Activated CD4-positive, alpha-beta memory T cell treated with anti-CD3 and anti-CD28 coated beads, Interleukin-2, amount 10 ng/mL, durations not matched to agents 7 days and 5 days (primary cell): ENCODE measurements at regions of chr2 and their contacts with region 1.

Region 1: GRCh38 chr2:27071277-27071989 is at the start of gene OST4:
- DNase-seq: peak; percentile 93
- H3K4me3 Mint-ChIP-seq: peak within 1 kb of the TSS; percentile 99
- H3K27ac Mint-ChIP-seq: peak within 1 kb of the TSS; percentile 95
- H3K4me1 Mint-ChIP-seq: peaks cover 73% of the 10 kb centered on the region
- H3K27me3 Mint-ChIP-seq: no peaks in the 10 kb centered on the region
- total RNA-seq, gene OST4: 305 to 312 TPM

Region 2: GRCh38 chr2:26745609-26746327 is 325.7 kb before region 1 on chr2:
- CTCF ChIA-PET with region 1: no interaction called
- POLR2A ChIA-PET with region 1: no interaction called
- DNase-seq: peak; percentile 80
- H3K4me3 Mint-ChIP-seq: no peak overlapping the region
- H3K27ac Mint-ChIP-seq: no peak overlapping the region
- H3K4me1 Mint-ChIP-seq: peaks cover 5% of the 10 kb centered on the region
- H3K27me3 Mint-ChIP-seq: no peaks in the 10 kb centered on the region

Region 3: DNA sequence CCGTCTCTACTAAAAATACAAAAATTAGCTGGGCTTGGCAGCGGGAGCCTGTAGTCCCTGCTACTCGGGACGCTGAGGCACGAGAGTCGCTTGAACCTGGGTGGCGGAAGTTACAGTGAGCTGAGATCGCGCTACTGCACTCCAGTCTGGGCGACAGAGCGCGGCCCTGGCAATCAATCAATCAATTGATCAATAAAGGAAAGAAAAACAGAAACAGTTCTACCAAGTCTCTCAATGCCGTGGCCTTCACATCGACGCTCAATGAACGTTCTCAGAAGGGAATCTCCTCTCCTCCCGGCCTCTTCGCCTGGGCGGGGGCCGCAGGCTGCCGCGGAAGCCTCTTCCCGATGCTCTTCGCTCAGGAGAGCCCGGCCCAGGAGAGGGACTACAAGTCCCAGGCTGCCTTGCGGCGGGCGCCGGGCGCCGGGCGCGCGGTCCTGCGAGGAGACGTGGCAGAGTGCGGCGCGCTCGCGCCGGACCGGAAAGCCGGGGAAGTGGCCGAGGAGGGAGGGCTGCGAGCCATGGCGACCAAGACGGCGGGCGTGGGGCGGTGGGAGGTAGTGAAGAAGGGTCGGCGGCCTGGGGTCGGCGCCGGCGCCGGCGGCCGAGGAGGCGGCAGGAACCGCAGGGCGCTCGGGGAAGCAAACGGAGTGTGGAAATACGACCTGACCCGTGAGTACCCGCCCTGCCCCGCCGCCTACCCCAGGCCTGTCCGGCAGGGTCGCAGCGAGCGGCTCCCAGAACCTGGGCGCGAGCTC is 38.8 kb before region 1 on chr2 and contains the start of gene TMEM214:
- CTCF ChIA-PET with region 1: no interaction called
- POLR2A ChIA-PET with region 1: interaction called, 14 read pairs
- DNase-seq: peak; percentile 87
- H3K4me3 Mint-ChIP-seq: peak within 1 kb of the TSS; percentile 93
- H3K27ac Mint-ChIP-seq: peak within 1 kb of the TSS; percentile 86
- H3K4me1 Mint-ChIP-seq: peaks cover 62% of the 10 kb centered on the region
- H3K27me3 Mint-ChIP-seq: no peaks in the 10 kb centered on the region
- total RNA-seq, gene TMEM214: 80.4 to 80.7 TPM

Region 4: GRCh38 chr2:27086090-27086723 is 14.8 kb after region 1 on chr2:
- CTCF ChIA-PET with region 1: interaction called, 11 read pairs
- POLR2A ChIA-PET with region 1: interaction called, 125 read pairs
- DNase-seq: peak; percentile 98
- H3K4me3 Mint-ChIP-seq: peak overlapping the region; percentile 79
- H3K27ac Mint-ChIP-seq: peak overlapping the region; percentile 80
- H3K4me1 Mint-ChIP-seq: peaks cover 41% of the 10 kb centered on the region
- H3K27me3 Mint-ChIP-seq: no peaks in the 10 kb centered on the region